Cardiac septum (tissue), 1 donor: ENCODE measurements at regions of chrX and their contacts with region 1.

Region 1: GRCh38 chrX:101348452-101349192 is at the start of gene TIMM8A:
- DNase-seq: peak; percentile 91
- total RNA-seq, gene TIMM8A: 24.8 TPM

Region 2: GRCh38 chrX:100819837-100820666 is 528.6 kb before region 1 on chrX and contains the start of gene CSTF2:
- intact Hi-C with region 1: no loop called
- DNase-seq: peak; percentile 91
- total RNA-seq, gene CSTF2: 7.8 TPM

Region 3: DNA sequence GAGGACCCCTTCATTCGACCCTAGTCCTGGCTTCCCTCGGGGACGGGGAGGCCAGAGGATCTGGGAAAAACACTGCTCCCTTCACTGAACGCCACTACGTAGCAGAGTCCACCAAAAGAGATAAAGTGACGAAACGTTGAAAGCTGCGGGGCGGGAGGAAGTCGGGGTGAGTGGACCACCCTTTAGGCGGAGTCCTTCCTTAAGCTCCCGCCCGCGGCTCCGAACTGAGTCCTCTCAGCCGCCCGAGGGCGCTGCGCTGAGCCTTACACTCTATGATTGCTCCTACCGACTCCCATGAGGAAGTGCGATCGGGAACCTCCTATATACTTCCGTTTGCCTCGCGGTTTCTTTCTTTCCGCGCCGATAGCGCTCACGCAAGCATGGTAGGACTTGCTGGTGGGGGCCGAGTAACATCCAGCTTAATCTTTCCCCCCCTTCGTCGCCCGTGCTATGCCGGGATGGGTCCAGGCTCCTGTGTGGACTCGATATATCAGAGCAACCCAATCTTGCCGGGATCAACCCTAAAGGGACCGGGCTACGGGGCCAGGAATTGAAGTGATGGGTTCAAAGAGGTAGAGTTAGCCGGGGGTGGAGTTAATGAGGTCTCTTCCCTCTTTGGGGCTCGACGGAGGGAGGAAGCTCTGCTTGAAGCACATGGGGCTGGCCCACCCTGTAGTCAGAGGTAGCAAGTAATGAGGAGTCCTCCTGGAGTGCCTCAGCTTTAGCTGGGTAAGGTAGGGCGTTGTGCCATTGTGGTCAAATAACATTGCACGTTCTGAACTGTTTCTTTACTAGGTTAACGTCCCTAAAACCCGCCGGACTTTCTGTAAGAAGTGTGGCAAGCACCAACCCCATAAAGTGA is 42.3 kb after region 1 on chrX and contains the start of gene RPL36A:
- intact Hi-C with region 1: loop called (anchors 5 kb)
- DNase-seq: peak; percentile 88
- total RNA-seq, gene RPL36A: 57.5 TPM